Activated CD4-positive, alpha-beta memory T cell treated with anti-CD3 and anti-CD28 coated beads, Interleukin-2, amount 10 ng/mL, durations not matched to agents 7 days and 5 days (primary cell): ENCODE measurements at regions of chrX and their contacts with region 1.

Region 1: GRCh38 chrX:103464774-103465117 is 54.5 kb downstream of the RAB40A start:
- DNase-seq: peak; percentile 79
- H3K4me3 Mint-ChIP-seq: peak overlapping the region; percentile 87
- H3K27ac Mint-ChIP-seq: peak overlapping the region; percentile 56
- H3K4me1 Mint-ChIP-seq: peaks cover 25% of the 10 kb centered on the region
- H3K27me3 Mint-ChIP-seq: no peaks in the 10 kb centered on the region

Region 2: DNA sequence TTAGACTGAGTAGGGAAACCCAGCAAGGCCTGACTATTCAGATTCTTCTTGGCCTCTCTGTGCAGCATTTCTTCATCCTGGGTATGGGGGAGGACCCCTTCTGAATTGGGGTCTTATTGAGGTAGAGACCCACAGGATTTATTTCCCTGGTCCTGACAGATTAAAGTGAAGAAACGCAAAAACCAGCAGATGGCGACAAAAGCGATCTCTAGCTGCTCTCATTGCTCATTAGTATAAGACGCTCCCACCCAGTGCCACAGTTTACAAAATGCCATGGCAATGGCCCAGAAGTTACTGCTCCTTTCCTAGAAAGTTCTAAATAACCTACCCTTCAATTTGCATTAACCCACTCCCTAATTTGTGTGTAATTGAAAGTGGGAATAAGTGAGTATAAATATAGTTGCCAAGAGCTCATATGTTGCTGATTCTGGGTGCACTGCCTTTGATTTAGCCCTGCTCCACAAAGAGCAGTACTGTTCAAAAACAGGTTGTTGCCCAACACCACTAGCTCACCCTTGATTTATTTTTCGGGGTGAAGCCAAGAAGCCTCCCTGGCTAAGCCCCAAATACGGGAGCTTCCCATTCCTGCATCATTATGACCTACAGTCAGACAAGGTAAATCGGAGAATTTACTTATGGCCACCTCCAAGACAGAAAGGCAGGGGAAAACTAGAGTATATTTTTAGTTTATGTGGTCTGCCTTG is 253.6 kb before region 1 on chrX:
- CTCF ChIA-PET with region 1: interaction called, 21 read pairs
- POLR2A ChIA-PET with region 1: no interaction called
- DNase-seq: peak; percentile 38
- H3K4me3 Mint-ChIP-seq: no peak overlapping the region
- H3K27ac Mint-ChIP-seq: no peak overlapping the region
- H3K4me1 Mint-ChIP-seq: peaks cover 3% of the 10 kb centered on the region
- H3K27me3 Mint-ChIP-seq: no peaks in the 10 kb centered on the region

Region 3: GRCh38 chrX:103343105-103343504 is 121.6 kb before region 1 on chrX:
- CTCF ChIA-PET with region 1: interaction called, 26 read pairs
- POLR2A ChIA-PET with region 1: no interaction called
- DNase-seq: peak; percentile 39
- H3K4me3 Mint-ChIP-seq: no peak overlapping the region
- H3K27ac Mint-ChIP-seq: no peak overlapping the region
- H3K4me1 Mint-ChIP-seq: peaks cover 3% of the 10 kb centered on the region
- H3K27me3 Mint-ChIP-seq: no peaks in the 10 kb centered on the region

Region 4: GRCh38 chrX:103398421-103398864 is 66.3 kb before region 1 on chrX:
- CTCF ChIA-PET with region 1: no interaction called
- POLR2A ChIA-PET with region 1: no interaction called
- DNase-seq: no peak
- H3K4me3 Mint-ChIP-seq: no peak overlapping the region
- H3K27ac Mint-ChIP-seq: no peak overlapping the region
- H3K4me1 Mint-ChIP-seq: peaks cover 7% of the 10 kb centered on the region
- H3K27me3 Mint-ChIP-seq: no peaks in the 10 kb centered on the region